GM12878 (cell line): ENCODE measurements at regions of chr5 and their contacts with region 1.

Region 1: DNA sequence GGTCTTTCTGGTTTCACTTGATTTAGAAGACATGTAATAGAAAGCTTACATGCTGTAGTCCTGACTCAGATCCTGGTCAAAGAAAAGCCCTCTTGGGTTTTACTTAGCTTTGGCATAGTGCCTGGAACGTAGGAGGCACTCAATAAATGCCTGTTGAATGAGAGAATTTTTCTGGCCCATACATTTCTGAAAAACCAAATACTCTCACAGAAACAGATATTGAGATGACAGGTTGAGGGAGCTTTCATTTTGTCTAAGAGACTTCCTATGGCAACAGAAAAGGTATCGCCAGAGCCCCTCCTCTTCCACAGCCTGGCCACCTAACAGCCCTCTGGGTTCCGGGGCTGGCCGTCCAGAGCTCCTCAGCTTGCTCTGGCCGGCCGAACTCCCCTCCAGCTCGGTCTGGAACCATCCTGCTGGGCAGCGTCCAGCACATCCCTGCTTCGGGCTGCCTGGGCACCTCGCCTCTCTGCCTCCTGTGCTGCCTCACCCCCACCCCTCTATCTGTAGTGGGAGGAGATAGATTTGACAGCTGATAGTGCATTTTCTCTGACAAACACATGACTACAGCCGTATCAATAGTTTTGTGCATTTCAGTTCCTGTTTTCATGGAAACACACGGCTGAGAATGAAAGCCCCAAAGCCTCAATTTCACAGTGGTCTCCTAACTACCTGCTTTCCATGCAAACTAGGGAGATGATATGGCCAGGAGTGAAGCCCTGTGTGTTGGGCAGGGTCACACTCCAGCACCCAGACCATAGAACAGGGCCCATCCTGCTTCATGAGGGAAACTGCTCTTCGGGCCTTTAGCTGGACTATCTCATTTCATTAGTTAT is 1.1 kb downstream of the IL4 start:
- DNase-seq: peak; percentile 93
- ATAC-seq: peak; percentile 88
- H3K4me3 ChIP-seq: peak overlapping the region; percentile 29; the same call in 1 of the 2 replicates
- H3K27ac ChIP-seq: peak overlapping the region; percentile 75
- H3K4me1 ChIP-seq: peaks cover 33% of the 10 kb centered on the region
- H3K27me3 ChIP-seq: no peaks in the 10 kb centered on the region
- CTCF ChIP-seq: no peak
- EP300 ChIP-seq: peak; percentile 92 to 96
- POLR2A ChIP-seq: peak; percentile 33; the same call in 1 of the 2 replicates
- RAD21 ChIP-seq: no peak

Region 2: DNA sequence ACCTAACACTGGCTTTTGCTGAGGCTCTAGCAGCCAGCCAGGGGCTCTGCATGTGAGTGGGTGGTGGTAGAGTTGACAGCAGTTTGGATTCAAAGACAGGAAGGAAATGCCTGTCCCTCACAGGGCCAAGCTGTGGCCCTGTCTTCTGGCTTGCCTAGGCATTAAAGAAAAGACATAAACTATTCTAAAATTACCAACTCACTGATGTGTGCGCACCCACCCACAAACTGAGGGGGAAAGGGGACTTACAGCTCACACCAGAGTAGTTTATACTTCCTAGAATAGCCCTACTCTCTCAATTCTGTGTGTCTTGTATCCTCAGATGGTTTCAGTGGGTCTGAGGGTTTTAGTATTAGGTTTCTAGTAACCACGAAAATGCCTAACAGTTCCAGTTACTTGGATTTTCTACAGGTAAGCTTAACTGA is 35.2 kb before region 1 on chr5:
- CTCF ChIA-PET with region 1: interaction called, 3 read pairs
- POLR2A ChIA-PET with region 1: interaction called, 18 read pairs
- RAD21 ChIA-PET with region 1: interaction called, 29 read pairs
- SMC1A ChIA-PET with region 1: interaction called, 17 read pairs
- in situ Hi-C with region 1: no loop called
- intact Hi-C with region 1: no loop called
- DNase-seq: peak; percentile 82
- ATAC-seq: peak; percentile 78
- H3K4me3 ChIP-seq: no peak overlapping the region
- H3K27ac ChIP-seq: peak overlapping the region; percentile 28
- H3K4me1 ChIP-seq: peaks cover 59% of the 10 kb centered on the region
- H3K27me3 ChIP-seq: no peaks in the 10 kb centered on the region
- CTCF ChIP-seq: no peak
- EP300 ChIP-seq: peak in 1 of 2 experiments; percentile 70; a peak in 2 of 4 replicates
- POLR2A ChIP-seq: no peak
- RAD21 ChIP-seq: no peak

Region 3: GRCh38 chr5:132704875-132705274 is 30.0 kb after region 1 on chr5:
- CTCF ChIA-PET with region 1: interaction called, 4 read pairs
- POLR2A ChIA-PET with region 1: no interaction called
- RAD21 ChIA-PET with region 1: interaction called, 4 read pairs
- SMC1A ChIA-PET with region 1: interaction called, 13 read pairs
- in situ Hi-C with region 1: no loop called
- intact Hi-C with region 1: no loop called
- DNase-seq: no peak
- ATAC-seq: no peak
- H3K4me3 ChIP-seq: no peak overlapping the region
- H3K27ac ChIP-seq: no peak overlapping the region
- H3K4me1 ChIP-seq: no peaks in the 10 kb centered on the region
- H3K27me3 ChIP-seq: no peaks in the 10 kb centered on the region
- CTCF ChIP-seq: no peak
- EP300 ChIP-seq: no peak
- POLR2A ChIP-seq: no peak
- RAD21 ChIP-seq: no peak

Region 4: DNA sequence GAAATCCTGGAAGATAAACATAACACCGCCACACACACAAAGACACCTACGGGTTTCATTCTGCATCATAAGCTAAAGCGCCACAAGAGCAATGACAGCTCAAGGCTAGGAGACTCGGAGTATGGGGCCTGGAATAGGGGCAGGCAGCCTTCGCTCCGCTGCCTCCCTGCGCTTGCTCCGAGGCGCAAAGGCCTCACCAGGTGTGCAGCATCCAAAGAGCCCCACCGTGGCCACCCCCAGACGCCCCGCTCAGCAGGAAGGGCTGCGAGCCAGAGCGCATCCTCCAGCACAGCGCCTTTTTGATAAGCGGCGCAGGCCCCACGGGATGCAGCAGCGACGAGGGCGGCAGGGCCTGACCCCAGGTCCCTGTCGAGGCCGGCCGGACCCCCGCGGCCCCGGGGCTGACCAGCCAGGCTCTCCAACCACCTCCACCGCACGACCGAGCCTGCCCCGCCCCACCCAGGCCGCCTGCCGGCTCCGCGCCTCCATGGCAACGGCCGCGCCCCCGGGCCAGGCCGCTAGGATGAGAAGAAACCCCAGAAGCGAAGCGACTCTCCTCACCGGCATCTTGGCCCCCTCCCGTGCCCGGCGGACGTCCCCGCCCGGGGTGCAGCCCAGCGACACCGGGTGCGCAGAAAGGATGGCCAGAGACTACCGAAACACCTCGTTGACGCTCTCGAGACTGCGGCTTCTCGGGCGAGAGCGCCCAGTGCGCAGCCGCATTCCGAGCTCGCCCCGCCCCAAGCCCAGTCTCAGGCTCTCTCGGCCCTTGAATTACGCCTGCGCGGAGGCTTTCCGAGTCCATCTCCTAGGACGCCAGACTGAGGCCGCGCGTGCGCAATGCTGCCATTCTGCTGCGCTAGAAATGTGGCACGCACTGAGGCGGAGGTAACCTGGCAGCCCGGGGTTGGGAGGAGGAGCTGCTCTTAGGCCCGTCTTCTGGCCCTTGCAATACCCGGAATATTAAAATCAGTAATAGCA is 62.3 kb after region 1 on chr5 and contains the start of gene KIF3A:
- CTCF ChIA-PET with region 1: interaction called, 3 read pairs
- POLR2A ChIA-PET with region 1: interaction called, 4 read pairs
- RAD21 ChIA-PET with region 1: interaction called, 12 read pairs
- SMC1A ChIA-PET with region 1: interaction called, 22 read pairs
- in situ Hi-C with region 1: no loop called
- intact Hi-C with region 1: no loop called
- DNase-seq: peak; percentile 94
- ATAC-seq: peak; percentile 91
- H3K4me3 ChIP-seq: peak within 1 kb of the TSS; percentile 80
- H3K27ac ChIP-seq: peak within 1 kb of the TSS; percentile 52
- H3K4me1 ChIP-seq: no peaks in the 10 kb centered on the region
- H3K27me3 ChIP-seq: no peaks in the 10 kb centered on the region
- CTCF ChIP-seq: no peak
- EP300 ChIP-seq: no peak
- POLR2A ChIP-seq: peak; percentile 89
- RAD21 ChIP-seq: no peak
- polyA plus RNA-seq, gene KIF3A: 2.7 to 3.0 TPM